ENCODE measurements at regions of chr4 and their contacts with region 1.

Region 1: GRCh38 chr4:165167650-165168049 is 39.7 kb upstream of the KLHL2 start:
- DNase-seq: no peak
- H3K4me3 Mint-ChIP-seq: no peak overlapping the region
- H3K27ac Mint-ChIP-seq: no peak overlapping the region
- H3K4me1 Mint-ChIP-seq: no peaks in the 10 kb centered on the region
- H3K27me3 Mint-ChIP-seq: no peaks in the 10 kb centered on the region

Region 2: GRCh38 chr4:165136529-165136928 is 31.1 kb before region 1 on chr4:
- CTCF ChIA-PET with region 1: no interaction called
- intact Hi-C with region 1: loop called (anchors 1 kb)
- DNase-seq: no peak
- H3K4me3 Mint-ChIP-seq: no peak overlapping the region
- H3K27ac Mint-ChIP-seq: no peak overlapping the region
- H3K4me1 Mint-ChIP-seq: peaks cover 2% of the 10 kb centered on the region
- H3K27me3 Mint-ChIP-seq: no peaks in the 10 kb centered on the region

Measured in activated naive CD4-positive, alpha-beta T cell treated with anti-CD3 and anti-CD28 coated beads for 36 hours (primary cell).